CD8-positive, alpha-beta memory T cell (primary cell): ENCODE measurements at regions of chr17 and their contacts with region 1.

Region 1: GRCh38 chr17:49180303-49180702 is 30.1 kb downstream of the GNGT2 start:
- DNase-seq: peak; percentile 54 to 71 (median 60)
- H3K4me3 ChIP-seq: no peak overlapping the region
- H3K4me3 Mint-ChIP-seq: peak overlapping the region in 2 of 7 donors; percentile 7 to 44
- H3K27ac ChIP-seq: no peak overlapping the region
- H3K27ac Mint-ChIP-seq: peak overlapping the region in 2 of 8 donors; percentile 9 to 24
- H3K4me1 ChIP-seq: no peaks in the 10 kb centered on the region
- H3K4me1 Mint-ChIP-seq: peaks cover 4 to 5% (median 5%) of the 10 kb centered on the region in 3 donors
- H3K27me3 ChIP-seq: no peaks in the 10 kb centered on the region
- H3K27me3 Mint-ChIP-seq: peaks cover 8 to 13% of the 10 kb centered on the region in 2 donors

Region 2: GRCh38 chr17:49101054-49101947 is 79.0 kb before region 1 on chr17:
- CTCF ChIA-PET with region 1: no interaction called
- POLR2A ChIA-PET with region 1: no interaction called
- DNase-seq: no peak
- H3K4me3 ChIP-seq: no peak overlapping the region
- H3K4me3 Mint-ChIP-seq: no peak overlapping the region
- H3K27ac ChIP-seq: no peak overlapping the region
- H3K27ac Mint-ChIP-seq: peak overlapping the region in 1 of 8 donors; percentile 52
- H3K4me1 ChIP-seq: no peaks in the 10 kb centered on the region
- H3K4me1 Mint-ChIP-seq: no peaks in the 10 kb centered on the region
- H3K27me3 ChIP-seq: no peaks in the 10 kb centered on the region
- H3K27me3 Mint-ChIP-seq: peaks cover 6 to 11% of the 10 kb centered on the region in 2 donors

Region 3: GRCh38 chr17:49125449-49125848 is 54.9 kb before region 1 on chr17:
- CTCF ChIA-PET with region 1: no interaction called
- POLR2A ChIA-PET with region 1: no interaction called
- DNase-seq: no peak
- H3K4me3 ChIP-seq: no peak overlapping the region
- H3K4me3 Mint-ChIP-seq: no peak overlapping the region
- H3K27ac ChIP-seq: no peak overlapping the region
- H3K27ac Mint-ChIP-seq: no peak overlapping the region
- H3K4me1 ChIP-seq: no peaks in the 10 kb centered on the region
- H3K4me1 Mint-ChIP-seq: no peaks in the 10 kb centered on the region
- H3K27me3 ChIP-seq: peaks cover 8% of the 10 kb centered on the region
- H3K27me3 Mint-ChIP-seq: peaks cover 7 to 42% of the 10 kb centered on the region in 2 donors

Region 4: DNA sequence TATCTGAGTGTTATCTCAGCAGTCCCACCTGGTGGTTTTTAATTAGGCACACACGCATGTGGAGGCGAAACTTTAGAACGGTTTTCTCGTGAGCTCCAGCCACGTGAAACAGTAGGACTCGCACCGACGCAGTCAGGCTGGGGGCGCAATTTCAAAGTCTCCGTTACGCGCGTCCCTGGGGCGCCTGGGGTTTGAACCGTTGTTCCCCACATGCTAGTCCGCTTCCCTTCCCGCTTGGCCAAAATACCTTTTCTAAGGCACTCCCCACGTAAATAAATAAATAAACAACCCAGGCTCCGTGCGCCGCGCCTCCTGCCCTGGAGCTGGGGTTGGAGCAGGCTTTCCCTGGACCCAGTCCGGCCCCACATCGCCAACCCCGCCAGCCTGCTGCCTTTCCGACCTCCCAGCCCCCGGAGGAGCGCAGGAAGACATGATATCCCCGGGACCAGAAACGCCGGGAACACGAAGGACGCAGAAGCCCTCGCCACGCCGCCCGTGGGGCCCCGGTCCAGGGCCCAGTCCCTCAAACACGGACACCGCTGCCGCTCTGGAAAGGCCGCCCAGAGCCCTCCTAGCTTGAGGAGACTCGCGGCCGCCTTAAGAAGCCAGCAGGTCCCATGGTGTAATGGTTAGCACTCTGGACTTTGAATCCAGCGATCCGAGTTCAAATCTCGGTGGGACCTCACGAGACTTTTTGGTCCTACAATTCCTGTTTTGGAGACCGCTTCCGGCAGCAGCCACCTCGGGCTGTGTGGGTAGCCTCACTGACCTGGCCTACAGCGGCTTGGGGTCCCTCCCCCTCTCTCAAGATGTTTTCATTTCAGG is 11.8 kb after region 1 on chr17:
- CTCF ChIA-PET with region 1: interaction called, 24 read pairs
- POLR2A ChIA-PET with region 1: interaction called, 3 read pairs
- DNase-seq: peak; percentile 79 to 95 (median 89)
- H3K4me3 ChIP-seq: peak overlapping the region; percentile 94
- H3K4me3 Mint-ChIP-seq: peak overlapping the region; percentile 84 to 97 (median 91)
- H3K27ac ChIP-seq: peak overlapping the region; percentile 78
- H3K27ac Mint-ChIP-seq: peak overlapping the region; percentile 88 to 99 (median 96)
- H3K4me1 ChIP-seq: peaks cover 4% of the 10 kb centered on the region
- H3K4me1 Mint-ChIP-seq: peaks cover 23 to 43% (median 40%) of the 10 kb centered on the region in 3 donors
- H3K27me3 ChIP-seq: no peaks in the 10 kb centered on the region
- H3K27me3 Mint-ChIP-seq: peaks cover 0 to 12% of the 10 kb centered on the region in 2 donors

Region 5: GRCh38 chr17:49210158-49211029 is 30.1 kb after region 1 on chr17 and contains the starts of genes ABI3 and GNGT2:
- CTCF ChIA-PET with region 1: interaction called, 18 read pairs
- POLR2A ChIA-PET with region 1: no interaction called
- DNase-seq: peak; percentile 47 to 78 (median 70)
- H3K4me3 ChIP-seq: peak within 1 kb of the TSS; percentile 69
- H3K4me3 Mint-ChIP-seq: peak within 1 kb of the TSS; percentile 81 to 99 (median 98)
- H3K27ac ChIP-seq: peak within 1 kb of the TSS; percentile 57
- H3K27ac Mint-ChIP-seq: peak within 1 kb of the TSS; percentile 88 to 97 (median 94)
- H3K4me1 ChIP-seq: peaks cover 71% of the 10 kb centered on the region
- H3K4me1 Mint-ChIP-seq: peaks cover 67 to 79% (median 77%) of the 10 kb centered on the region in 3 donors
- H3K27me3 ChIP-seq: no peaks in the 10 kb centered on the region
- H3K27me3 Mint-ChIP-seq: no peaks in the 10 kb centered on the region
- total RNA-seq, gene ABI3: 46.4 to 48.5 TPM
- total RNA-seq, gene GNGT2: 24.0 to 26.5 TPM

Region 6: GRCh38 chr17:49217651-49218413 is 37.5 kb after region 1 on chr17:
- CTCF ChIA-PET with region 1: interaction called, 19 read pairs
- POLR2A ChIA-PET with region 1: no interaction called
- DNase-seq: peak; percentile 62 to 92 (median 90)
- H3K4me3 ChIP-seq: peak overlapping the region; percentile 49
- H3K4me3 Mint-ChIP-seq: peak overlapping the region; percentile 67 to 88 (median 83)
- H3K27ac ChIP-seq: peak overlapping the region; percentile 59
- H3K27ac Mint-ChIP-seq: peak overlapping the region; percentile 94 to 100 (median 98)
- H3K4me1 ChIP-seq: peaks cover 77% of the 10 kb centered on the region
- H3K4me1 Mint-ChIP-seq: peaks cover 66 to 85% (median 69%) of the 10 kb centered on the region in 3 donors
- H3K27me3 ChIP-seq: no peaks in the 10 kb centered on the region
- H3K27me3 Mint-ChIP-seq: no peaks in the 10 kb centered on the region

Region 7: GRCh38 chr17:49223517-49224197 is 43.4 kb after region 1 on chr17:
- CTCF ChIA-PET with region 1: interaction called, 150 read pairs
- POLR2A ChIA-PET with region 1: interaction called, 4 read pairs
- DNase-seq: peak; percentile 50 to 75 (median 60)
- H3K4me3 ChIP-seq: peak overlapping the region; percentile 56
- H3K4me3 Mint-ChIP-seq: peak overlapping the region; percentile 81 to 91 (median 83)
- H3K27ac ChIP-seq: no peak overlapping the region
- H3K27ac Mint-ChIP-seq: peak overlapping the region; percentile 43 to 89 (median 82)
- H3K4me1 ChIP-seq: peaks cover 56% of the 10 kb centered on the region
- H3K4me1 Mint-ChIP-seq: peaks cover 36 to 74% (median 41%) of the 10 kb centered on the region in 3 donors
- H3K27me3 ChIP-seq: no peaks in the 10 kb centered on the region
- H3K27me3 Mint-ChIP-seq: no peaks in the 10 kb centered on the region

Region 8: DNA sequence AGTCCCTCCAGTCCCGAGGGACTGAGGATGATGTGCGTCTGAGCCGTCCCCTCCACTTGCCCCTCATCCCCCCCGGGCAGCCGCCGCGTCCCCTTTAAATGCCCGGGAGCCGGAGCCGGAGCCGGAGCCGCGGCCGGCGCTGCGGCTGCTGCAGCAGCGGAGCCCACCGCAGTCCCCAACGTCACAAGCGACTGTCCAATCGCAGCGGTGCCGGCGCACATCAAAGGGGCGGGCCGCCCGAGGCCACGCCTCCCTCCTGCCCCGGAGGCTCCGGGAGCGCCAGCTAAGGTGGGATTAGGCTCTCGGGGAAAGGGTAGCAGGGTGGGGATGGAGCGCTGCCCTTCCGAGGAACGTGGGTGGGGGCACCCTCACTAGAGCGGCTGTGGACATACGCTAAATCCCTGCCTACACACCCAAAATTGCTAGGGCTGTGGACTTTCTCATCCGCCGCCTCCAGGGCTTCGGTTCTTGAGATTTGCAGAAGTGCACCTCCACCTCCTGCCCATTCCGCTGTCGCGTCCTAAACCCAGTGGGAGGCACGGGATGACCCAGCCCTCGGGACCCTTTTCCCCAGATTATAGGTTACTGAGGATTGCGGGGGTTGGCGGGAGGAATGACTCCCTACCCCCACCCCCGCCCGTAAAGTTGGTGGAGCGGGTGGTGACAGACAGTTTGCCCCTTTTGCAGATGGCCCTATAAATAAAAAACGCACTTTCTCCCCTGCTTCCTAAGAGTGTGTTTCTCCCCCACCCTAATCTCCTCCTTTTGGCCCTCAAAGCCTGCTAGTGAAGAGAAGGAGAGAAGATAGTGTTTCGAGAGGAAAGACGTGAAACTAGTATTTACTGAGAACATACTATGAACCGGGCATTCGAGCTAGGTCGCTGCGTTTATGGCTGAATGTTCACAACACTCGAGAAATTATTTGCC is 50.6 kb after region 1 on chr17 and contains the start of gene PHOSPHO1:
- CTCF ChIA-PET with region 1: interaction called, 150 read pairs
- POLR2A ChIA-PET with region 1: interaction called, 3 read pairs
- DNase-seq: peak; percentile 85 to 93 (median 85)
- H3K4me3 ChIP-seq: peak within 1 kb of the TSS; percentile 91
- H3K4me3 Mint-ChIP-seq: peak within 1 kb of the TSS; percentile 72 to 95 (median 85)
- H3K27ac ChIP-seq: no peak within 1 kb of the TSS
- H3K27ac Mint-ChIP-seq: peak within 1 kb of the TSS in 7 of 8 donors; percentile 61 to 96 (median 78)
- H3K4me1 ChIP-seq: peaks cover 20% of the 10 kb centered on the region
- H3K4me1 Mint-ChIP-seq: peaks cover 12 to 41% (median 17%) of the 10 kb centered on the region in 3 donors
- H3K27me3 ChIP-seq: no peaks in the 10 kb centered on the region
- H3K27me3 Mint-ChIP-seq: peaks cover 6 to 9% of the 10 kb centered on the region in 2 donors
- total RNA-seq, gene PHOSPHO1: not detected

Region 9: DNA sequence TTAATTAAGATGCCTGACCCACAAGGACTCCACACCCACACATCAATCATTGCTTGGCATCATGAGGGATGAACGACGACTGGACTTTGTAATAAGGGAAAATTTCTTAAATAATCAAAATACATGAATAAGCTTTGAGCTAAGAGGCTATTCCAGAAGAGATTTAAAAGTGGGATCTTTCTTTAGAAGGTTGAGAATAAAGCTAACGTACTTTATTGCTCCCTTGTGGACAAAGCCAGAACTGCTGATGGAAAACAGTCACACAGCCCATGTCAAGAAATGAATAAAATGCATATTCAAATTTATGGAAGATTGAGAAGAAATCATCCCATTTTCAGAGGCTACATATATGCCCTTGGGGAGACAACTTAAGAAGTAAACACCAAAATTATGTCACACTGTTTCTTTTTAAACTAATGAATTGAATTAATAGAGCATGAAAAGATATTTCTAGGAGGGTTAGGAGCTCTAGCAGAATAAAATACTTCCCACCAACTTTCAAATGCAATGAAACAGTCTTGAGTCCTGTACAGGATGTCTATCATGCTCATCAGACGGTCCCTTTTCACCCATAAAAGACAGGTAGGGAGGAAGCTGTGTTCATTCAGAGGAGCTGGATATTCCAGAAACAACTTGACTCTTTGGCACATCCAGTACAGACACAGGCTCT is 110.5 kb after region 1 on chr17:
- CTCF ChIA-PET with region 1: interaction called, 14 read pairs
- POLR2A ChIA-PET with region 1: no interaction called
- DNase-seq: peak in 1 of 5 donors; percentile 18
- H3K4me3 ChIP-seq: no peak overlapping the region
- H3K4me3 Mint-ChIP-seq: no peak overlapping the region
- H3K27ac ChIP-seq: no peak overlapping the region
- H3K27ac Mint-ChIP-seq: no peak overlapping the region
- H3K4me1 ChIP-seq: no peaks in the 10 kb centered on the region
- H3K4me1 Mint-ChIP-seq: peaks cover 0 to 8% (median 2%) of the 10 kb centered on the region in 3 donors
- H3K27me3 ChIP-seq: no peaks in the 10 kb centered on the region
- H3K27me3 Mint-ChIP-seq: no peaks in the 10 kb centered on the region